ENCODE measurements at regions of chr1 and their contacts with region 1.

Region 1: GRCh38 chr1:214328770-214329469 is 48.0 kb downstream of the SMYD2 start:
- DNase-seq: peak; percentile 80
- H3K4me3 ChIP-seq: no peak overlapping the region
- H3K27ac ChIP-seq: no peak overlapping the region
- H3K4me1 ChIP-seq: peaks cover 6% of the 10 kb centered on the region
- H3K27me3 ChIP-seq: no peaks in the 10 kb centered on the region
- CTCF ChIP-seq: peak; percentile 93

Region 2: DNA sequence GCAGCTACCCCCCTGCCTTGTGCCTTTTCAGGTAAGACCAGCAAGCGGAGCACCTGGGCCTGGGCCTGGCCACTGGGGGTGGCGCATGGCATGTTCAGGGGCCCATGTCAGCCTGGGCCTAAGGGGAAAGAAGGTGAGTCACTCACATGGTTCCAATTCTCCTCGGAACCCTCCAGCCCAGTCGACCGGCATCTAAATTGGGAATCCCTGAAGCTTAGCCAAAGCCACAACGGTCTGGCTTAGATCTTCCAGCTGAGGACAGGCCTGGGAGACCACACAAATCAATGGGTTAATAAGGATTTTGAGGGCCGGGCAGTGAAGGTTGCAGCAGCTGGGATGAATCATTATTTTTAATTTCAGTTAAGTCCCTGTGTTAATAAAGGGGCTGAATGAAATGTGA is 193.0 kb before region 1 on chr1:
- CTCF ChIA-PET with region 1: interaction called, 11 read pairs
- POLR2A ChIA-PET with region 1: no interaction called
- intact Hi-C with region 1: no loop called
- DNase-seq: no peak
- H3K4me3 ChIP-seq: no peak overlapping the region
- H3K27ac ChIP-seq: no peak overlapping the region
- H3K4me1 ChIP-seq: no peaks in the 10 kb centered on the region
- H3K27me3 ChIP-seq: peaks cover 13% of the 10 kb centered on the region
- CTCF ChIP-seq: no peak

Region 3: GRCh38 chr1:214261206-214262123 is 67.5 kb before region 1 on chr1:
- CTCF ChIA-PET with region 1: interaction called, 29 read pairs
- POLR2A ChIA-PET with region 1: no interaction called
- intact Hi-C with region 1: loop called (anchors 1 kb)
- DNase-seq: peak; percentile 87
- H3K4me3 ChIP-seq: peak overlapping the region; percentile 14
- H3K27ac ChIP-seq: no peak overlapping the region
- H3K4me1 ChIP-seq: peaks cover 27% of the 10 kb centered on the region
- H3K27me3 ChIP-seq: no peaks in the 10 kb centered on the region
- CTCF ChIP-seq: peak; percentile 99

Region 4: DNA sequence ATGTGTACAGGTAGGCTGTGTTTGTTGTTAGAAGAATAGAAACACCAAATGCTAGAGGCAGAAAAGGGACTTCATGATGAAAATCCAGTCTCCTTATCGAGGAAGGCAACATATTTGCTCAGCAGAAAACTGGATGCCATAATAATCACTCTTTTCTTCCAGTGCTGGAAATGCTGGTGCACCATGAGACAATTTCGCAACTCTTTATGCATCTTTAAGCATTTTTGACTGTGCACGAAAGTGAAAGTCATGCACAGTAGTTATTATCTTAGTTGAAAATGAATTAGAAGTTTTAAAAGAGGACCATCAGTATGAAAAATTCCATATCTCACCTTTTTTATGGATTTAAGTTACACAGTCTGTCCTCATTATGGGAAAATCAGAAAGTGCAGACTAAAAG is 18.9 kb before region 1 on chr1:
- CTCF ChIA-PET with region 1: no interaction called
- POLR2A ChIA-PET with region 1: no interaction called
- intact Hi-C with region 1: no loop called
- DNase-seq: no peak
- H3K4me3 ChIP-seq: no peak overlapping the region
- H3K27ac ChIP-seq: no peak overlapping the region
- H3K4me1 ChIP-seq: peaks cover 7% of the 10 kb centered on the region
- H3K27me3 ChIP-seq: no peaks in the 10 kb centered on the region
- CTCF ChIP-seq: no peak

Region 5: GRCh38 chr1:214584805-214585766 is 256.2 kb after region 1 on chr1:
- CTCF ChIA-PET with region 1: interaction called, 62 read pairs
- POLR2A ChIA-PET with region 1: no interaction called
- intact Hi-C with region 1: loop called (anchors 1 kb)
- DNase-seq: peak; percentile 80
- H3K4me3 ChIP-seq: no peak overlapping the region
- H3K27ac ChIP-seq: peak overlapping the region; percentile 42
- H3K4me1 ChIP-seq: peaks cover 43% of the 10 kb centered on the region
- H3K27me3 ChIP-seq: no peaks in the 10 kb centered on the region
- CTCF ChIP-seq: peak; percentile 82

Region 6: GRCh38 chr1:214632091-214632490 is 303.2 kb after region 1 on chr1:
- CTCF ChIA-PET with region 1: interaction called, 13 read pairs
- POLR2A ChIA-PET with region 1: no interaction called
- intact Hi-C with region 1: loop called (anchors 1 kb)
- DNase-seq: no peak
- H3K4me3 ChIP-seq: no peak overlapping the region
- H3K27ac ChIP-seq: no peak overlapping the region
- H3K4me1 ChIP-seq: no peaks in the 10 kb centered on the region
- H3K27me3 ChIP-seq: no peaks in the 10 kb centered on the region
- CTCF ChIP-seq: no peak